Activated T-helper 2 cell treated with anti-CD3 and anti-CD28 coated beads, Interferon-gamma antibody, Interleukin-2, Interleukin-4, amounts not matched to agents 10 μg/mL and 5 μg/mL and 100 μg/mL, durations not matched to agents 14 hours and 24 hours and 36 hours (primary cell): ENCODE measurements at regions of chr13 and their contacts with region 1.

Region 1: DNA sequence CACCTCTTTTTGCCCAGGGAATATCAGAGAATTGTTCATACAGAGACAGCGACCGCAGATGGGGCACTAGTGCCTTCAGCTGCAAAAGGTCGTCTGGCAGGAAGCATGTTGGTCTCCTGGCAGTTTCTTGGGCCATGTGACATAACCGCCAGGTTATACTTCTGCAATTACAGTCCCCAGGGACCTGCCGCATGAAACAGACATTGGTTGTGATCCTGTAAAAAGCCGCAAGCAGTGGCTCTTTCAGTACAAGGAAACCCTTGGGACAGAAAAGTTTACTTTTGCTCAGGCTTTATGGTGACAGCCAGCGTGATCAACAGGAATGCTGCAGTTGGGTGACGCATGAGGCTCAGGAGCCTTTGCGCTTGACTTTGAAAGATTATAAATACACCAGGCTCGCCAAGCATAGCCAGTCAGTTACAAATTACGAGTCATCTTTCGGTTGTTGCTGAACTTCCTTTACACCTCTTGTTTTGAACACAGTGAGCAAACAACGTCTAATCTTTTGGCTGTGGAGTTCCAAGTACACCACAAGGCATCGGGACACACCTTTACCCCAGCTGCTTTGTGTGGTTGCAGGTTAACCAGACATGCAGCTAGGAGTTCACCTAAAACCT is 50.5 kb upstream of the UBE2L5 start:
- DNase-seq: peak; percentile 60
- H3K4me3 Mint-ChIP-seq: peak overlapping the region; percentile 56
- H3K27ac Mint-ChIP-seq: peak overlapping the region; percentile 98
- H3K4me1 Mint-ChIP-seq: peaks cover 71% of the 10 kb centered on the region
- H3K27me3 Mint-ChIP-seq: no peaks in the 10 kb centered on the region

Region 2: DNA sequence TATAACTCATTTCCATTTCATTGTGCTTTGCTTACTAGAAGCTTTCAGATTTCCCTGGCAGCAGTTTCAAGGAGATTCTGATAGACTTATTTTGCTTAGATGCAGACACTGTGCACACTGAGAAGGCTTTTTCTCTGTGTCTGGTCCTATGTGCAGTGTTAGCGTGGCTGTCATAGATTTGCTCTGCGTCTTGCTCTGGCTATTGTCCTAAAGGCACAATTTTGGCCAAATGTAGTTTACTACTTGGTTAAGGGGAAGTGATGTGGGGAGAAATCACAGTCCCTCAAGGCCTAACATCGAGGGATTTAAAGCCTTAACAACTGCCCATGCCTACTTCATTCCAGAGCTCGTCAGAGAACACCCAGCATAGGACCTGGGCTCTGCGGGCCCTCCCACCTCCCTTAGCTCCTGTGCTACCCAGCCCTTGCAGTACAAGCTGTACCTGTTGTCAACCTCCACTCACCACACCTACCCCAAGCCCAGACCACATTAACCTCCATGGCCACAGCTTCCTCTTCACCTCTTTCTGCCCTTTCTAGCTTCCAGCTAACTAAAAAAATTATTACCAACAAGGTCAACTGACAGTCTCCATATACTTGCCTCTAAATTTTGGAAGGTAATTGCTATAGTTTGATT is 25.5 kb before region 1 on chr13:
- intact Hi-C with region 1: loop called (anchors 2 kb)
- DNase-seq: peak; percentile 73
- H3K4me3 Mint-ChIP-seq: peak overlapping the region; percentile 1
- H3K27ac Mint-ChIP-seq: peak overlapping the region; percentile 26
- H3K4me1 Mint-ChIP-seq: peaks cover 36% of the 10 kb centered on the region
- H3K27me3 Mint-ChIP-seq: no peaks in the 10 kb centered on the region

Region 3: GRCh38 chr13:30422054-30422839 is 50.5 kb after region 1 on chr13 and contains the start of gene UBE2L5:
- intact Hi-C with region 1: loop called (anchors 5 kb)
- DNase-seq: peak; percentile 73
- H3K4me3 Mint-ChIP-seq: peak within 1 kb of the TSS; percentile 86
- H3K27ac Mint-ChIP-seq: peak within 1 kb of the TSS; percentile 76
- H3K4me1 Mint-ChIP-seq: peaks cover 14% of the 10 kb centered on the region
- H3K27me3 Mint-ChIP-seq: no peaks in the 10 kb centered on the region
- total RNA-seq, gene UBE2L5: not detected in 2 replicates

Region 4: DNA sequence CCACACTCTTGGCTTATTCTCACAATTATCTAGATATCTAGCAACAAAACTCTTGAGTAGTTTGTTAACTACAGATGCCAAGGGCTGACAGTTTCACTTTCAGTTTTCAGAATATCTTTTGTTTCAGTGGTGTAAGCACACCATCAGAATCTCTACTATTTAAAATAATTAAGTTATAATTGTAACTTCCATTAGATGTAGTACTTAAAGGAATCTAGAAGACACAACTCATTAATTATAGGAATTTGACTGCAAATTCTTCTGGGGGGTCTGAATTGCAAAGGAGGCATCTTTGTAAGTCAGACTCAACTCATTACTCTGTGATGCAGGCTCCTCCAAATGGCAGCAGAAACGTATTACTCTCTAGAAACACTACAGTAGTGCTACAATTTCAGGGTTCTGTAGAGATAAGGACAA is 201.1 kb after region 1 on chr13:
- intact Hi-C with region 1: loop called (anchors 5 kb)
- DNase-seq: no peak
- H3K4me3 Mint-ChIP-seq: peak overlapping the region; percentile 62
- H3K27ac Mint-ChIP-seq: peak overlapping the region; percentile 18
- H3K4me1 Mint-ChIP-seq: peaks cover 54% of the 10 kb centered on the region
- H3K27me3 Mint-ChIP-seq: peaks cover 2% of the 10 kb centered on the region